ENCODE measurements at regions of chr14 and their contacts with region 1.

Region 1: GRCh38 chr14:73491256-73492042 is 716 bp downstream of the RIOX1 start:
- DNase-seq: peak in 8 of 9 donors; percentile 7 to 79 (median 60)
- ATAC-seq: peak; percentile 79
- H3K4me3 ChIP-seq: peak overlapping the region; percentile 91
- H3K4me3 Mint-ChIP-seq: peak overlapping the region; percentile 84 to 90 (median 88)
- H3K27ac ChIP-seq: peak overlapping the region; percentile 86
- H3K27ac Mint-ChIP-seq: peak overlapping the region in 8 of 9 donors; percentile 83 to 90 (median 88)
- H3K4me1 ChIP-seq: peaks cover 21 to 27% of the 10 kb centered on the region in 2 donors
- H3K4me1 Mint-ChIP-seq: peaks cover 8 to 59% (median 48%) of the 10 kb centered on the region in 7 donors
- H3K27me3 ChIP-seq: no peaks in the 10 kb centered on the region
- H3K27me3 Mint-ChIP-seq: peaks cover 0 to 17% (median 0%) of the 10 kb centered on the region in 5 donors

Region 2: DNA sequence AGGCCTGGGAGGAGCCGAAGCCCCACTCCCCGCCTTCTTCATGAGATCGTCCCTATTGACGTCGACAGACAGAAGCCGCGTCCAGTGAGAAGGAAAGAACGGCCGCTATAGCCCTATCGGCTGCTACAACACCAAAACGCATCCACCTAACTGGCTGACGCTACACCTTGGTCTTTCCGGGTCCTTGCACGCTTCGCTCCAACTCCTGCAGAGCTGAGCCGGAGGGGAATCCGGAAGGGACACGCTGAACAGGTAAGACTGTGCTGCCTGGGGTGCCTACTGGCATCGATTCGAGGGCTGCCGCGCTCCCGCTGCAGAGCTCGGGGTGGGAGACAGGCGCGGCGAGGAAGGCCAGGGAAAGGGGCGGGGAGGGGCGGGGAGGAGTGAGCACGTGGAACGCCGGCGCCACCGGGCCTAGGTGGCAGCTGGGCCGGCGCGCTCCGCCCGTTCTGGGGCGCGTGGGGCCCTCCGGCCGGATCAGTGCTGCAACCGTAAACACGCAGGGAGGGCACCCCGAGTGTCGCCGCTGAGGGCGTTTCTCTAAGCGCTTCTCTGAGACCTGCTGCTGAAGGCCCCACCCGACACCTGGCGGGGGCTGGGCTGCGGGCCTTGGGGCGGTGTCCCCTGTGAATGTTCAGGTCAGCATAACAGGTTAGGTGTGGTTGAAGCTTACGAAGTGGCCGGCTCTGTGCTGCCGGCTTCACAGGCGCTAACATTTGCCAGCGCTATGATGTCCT is 565.0 kb before region 1 on chr14 and contains the start of gene DCAF4:
- CTCF ChIA-PET with region 1: no interaction called
- POLR2A ChIA-PET with region 1: no interaction called
- intact Hi-C with region 1: loop called in 1 of 2 experiments (anchors 2 kb)
- DNase-seq: peak; percentile 67 to 96 (median 92)
- ATAC-seq: peak; percentile 96
- H3K4me3 ChIP-seq: peak within 1 kb of the TSS; percentile 64
- H3K4me3 Mint-ChIP-seq: peak within 1 kb of the TSS; percentile 93 to 99 (median 96)
- H3K27ac ChIP-seq: peak within 1 kb of the TSS; percentile 74
- H3K27ac Mint-ChIP-seq: peak within 1 kb of the TSS; percentile 58 to 96 (median 95)
- H3K4me1 ChIP-seq: peaks cover 0 to 3% of the 10 kb centered on the region in 2 donors
- H3K4me1 Mint-ChIP-seq: peaks cover 2 to 27% (median 11%) of the 10 kb centered on the region in 7 donors
- H3K27me3 ChIP-seq: no peaks in the 10 kb centered on the region
- H3K27me3 Mint-ChIP-seq: peaks cover 0 to 21% (median 0%) of the 10 kb centered on the region in 5 donors
- total RNA-seq, gene DCAF4: 17.6 to 37.8 (median 21.8) TPM

Region 3: GRCh38 chr14:73458151-73458976 is 33.1 kb before region 1 on chr14 and contains the start of gene NUMB:
- CTCF ChIA-PET with region 1: no interaction called
- POLR2A ChIA-PET with region 1: interaction called, 19 read pairs
- intact Hi-C with region 1: loop called (anchors 1 kb)
- DNase-seq: peak; percentile 70 to 99 (median 98)
- ATAC-seq: peak; percentile 99
- H3K4me3 ChIP-seq: peak within 1 kb of the TSS; percentile 71
- H3K4me3 Mint-ChIP-seq: peak within 1 kb of the TSS; percentile 87 to 100 (median 98)
- H3K27ac ChIP-seq: peak within 1 kb of the TSS; percentile 82
- H3K27ac Mint-ChIP-seq: peak within 1 kb of the TSS; percentile 80 to 98 (median 94)
- H3K4me1 ChIP-seq: peaks cover 0 to 9% of the 10 kb centered on the region in 2 donors
- H3K4me1 Mint-ChIP-seq: peaks cover 32 to 48% (median 45%) of the 10 kb centered on the region in 7 donors
- H3K27me3 ChIP-seq: no peaks in the 10 kb centered on the region
- H3K27me3 Mint-ChIP-seq: no peaks in the 10 kb centered on the region
- total RNA-seq, gene NUMB: 48.9 to 90.6 (median 49.4) TPM

Region 4: DNA sequence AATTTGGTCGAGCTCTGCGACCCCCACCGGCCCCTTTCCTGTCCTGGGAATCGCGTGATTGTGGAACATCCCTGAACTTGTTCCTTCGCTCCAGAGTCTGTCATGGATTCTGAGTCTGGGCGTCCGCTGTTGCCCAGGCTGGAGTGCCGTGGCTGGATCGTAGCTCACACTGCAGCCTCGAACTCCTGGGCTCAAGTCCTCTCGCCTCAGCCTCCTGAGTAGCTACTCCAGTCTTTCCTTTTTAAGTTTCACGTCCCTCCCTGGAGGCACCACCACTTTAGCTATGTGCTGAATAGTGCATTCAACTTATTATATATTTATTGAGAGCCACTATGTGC is 121.6 kb after region 1 on chr14:
- CTCF ChIA-PET with region 1: no interaction called
- POLR2A ChIA-PET with region 1: interaction called, 10 read pairs
- intact Hi-C with region 1: no loop called
- DNase-seq: no peak
- ATAC-seq: no peak
- H3K4me3 ChIP-seq: peak overlapping the region; percentile 73
- H3K4me3 Mint-ChIP-seq: peak overlapping the region; percentile 82 to 90 (median 88)
- H3K27ac ChIP-seq: peak overlapping the region; percentile 65
- H3K27ac Mint-ChIP-seq: peak overlapping the region; percentile 72 to 90 (median 84)
- H3K4me1 ChIP-seq: no peaks in the 10 kb centered on the region
- H3K4me1 Mint-ChIP-seq: peaks cover 0 to 14% (median 0%) of the 10 kb centered on the region in 7 donors
- H3K27me3 ChIP-seq: no peaks in the 10 kb centered on the region
- H3K27me3 Mint-ChIP-seq: peaks cover 0 to 10% (median 0%) of the 10 kb centered on the region in 5 donors

Region 5: GRCh38 chr14:73713803-73714655 is 222.6 kb after region 1 on chr14 and contains the start of gene PNMA1:
- CTCF ChIA-PET with region 1: no interaction called
- POLR2A ChIA-PET with region 1: interaction called, 3 read pairs
- intact Hi-C with region 1: loop called (anchors 2 to 10 kb)
- DNase-seq: peak; percentile 76 to 90 (median 83)
- ATAC-seq: peak; percentile 91
- H3K4me3 ChIP-seq: peak within 1 kb of the TSS; percentile 92
- H3K4me3 Mint-ChIP-seq: peak within 1 kb of the TSS; percentile 91 to 100 (median 97)
- H3K27ac ChIP-seq: peak within 1 kb of the TSS; percentile 83
- H3K27ac Mint-ChIP-seq: peak within 1 kb of the TSS; percentile 93 to 99 (median 96)
- H3K4me1 ChIP-seq: peaks cover 3 to 4% of the 10 kb centered on the region in 2 donors
- H3K4me1 Mint-ChIP-seq: peaks cover 22 to 40% (median 26%) of the 10 kb centered on the region in 7 donors
- H3K27me3 ChIP-seq: no peaks in the 10 kb centered on the region
- H3K27me3 Mint-ChIP-seq: no peaks in the 10 kb centered on the region
- total RNA-seq, gene PNMA1: 21.6 to 40.4 (median 37.1) TPM

Region 6: DNA sequence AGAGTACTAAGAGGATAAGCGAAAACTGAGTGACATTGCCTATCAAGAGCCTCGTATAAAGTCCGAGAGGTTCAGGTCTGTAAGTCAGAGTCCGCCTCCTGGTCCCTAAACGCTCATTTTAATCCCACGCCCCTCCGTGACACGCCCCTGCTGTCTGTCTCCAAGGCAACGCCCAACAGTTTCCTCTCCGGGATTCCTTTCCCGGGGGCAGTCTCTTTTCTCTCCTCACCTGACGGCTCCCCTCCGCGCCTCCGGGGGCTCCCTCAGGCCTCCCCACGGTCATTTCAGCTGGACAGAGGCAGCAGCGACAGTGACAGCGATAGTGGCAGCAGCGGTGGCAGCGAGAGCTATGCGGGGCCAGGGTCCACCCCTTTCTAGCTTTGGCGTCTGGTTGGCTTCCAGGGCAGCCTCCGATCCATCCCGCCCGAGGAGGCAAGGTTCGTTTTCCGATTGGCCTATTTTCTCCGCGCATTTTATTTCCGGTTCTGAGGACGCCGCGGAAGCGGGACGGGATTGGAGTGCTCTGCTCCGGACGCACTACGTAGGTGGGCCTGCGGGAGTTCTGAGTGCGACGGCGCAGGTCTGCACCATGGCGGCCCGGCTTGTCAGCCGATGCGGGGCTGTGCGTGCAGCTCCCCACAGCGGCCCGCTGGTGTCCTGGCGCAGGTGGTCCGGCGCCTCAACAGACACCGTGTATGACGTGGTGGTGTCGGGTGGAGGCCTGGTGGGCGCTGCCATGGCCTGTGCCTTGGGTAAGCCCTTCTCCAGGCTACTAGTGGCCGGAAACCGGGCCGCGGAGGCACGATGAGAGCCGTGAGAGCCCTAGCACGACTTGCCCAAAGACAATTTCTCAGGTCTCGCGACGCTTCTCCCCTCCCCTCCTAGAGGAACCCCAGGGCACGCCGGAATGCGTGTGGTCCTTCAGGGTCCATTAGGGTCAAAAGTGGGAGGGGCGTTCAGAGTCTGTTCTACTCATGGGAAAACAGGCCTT is 458.6 kb after region 1 on chr14 and contains the starts of genes COQ6 and FAM161B:
- CTCF ChIA-PET with region 1: no interaction called
- POLR2A ChIA-PET with region 1: no interaction called
- intact Hi-C with region 1: loop called in 1 of 2 experiments (anchors 2 kb)
- DNase-seq: peak; percentile 82 to 97 (median 95)
- ATAC-seq: peak; percentile 96
- H3K4me3 ChIP-seq: peak within 1 kb of the TSS; percentile 92
- H3K4me3 Mint-ChIP-seq: peak within 1 kb of the TSS; percentile 96 to 99 (median 98)
- H3K27ac ChIP-seq: peak within 1 kb of the TSS; percentile 94
- H3K27ac Mint-ChIP-seq: peak within 1 kb of the TSS; percentile 93 to 98 (median 95)
- H3K4me1 ChIP-seq: peaks cover 0 to 4% of the 10 kb centered on the region in 2 donors
- H3K4me1 Mint-ChIP-seq: peaks cover 5 to 34% (median 27%) of the 10 kb centered on the region in 7 donors
- H3K27me3 ChIP-seq: no peaks in the 10 kb centered on the region
- H3K27me3 Mint-ChIP-seq: no peaks in the 10 kb centered on the region
- total RNA-seq, gene COQ6: 22.8 to 47.3 (median 36.4) TPM
- total RNA-seq, gene FAM161B: 1.8 to 6.6 (median 3.7) TPM